ENCODE measurements at regions of chr17 and their contacts with region 1.

Region 1: DNA sequence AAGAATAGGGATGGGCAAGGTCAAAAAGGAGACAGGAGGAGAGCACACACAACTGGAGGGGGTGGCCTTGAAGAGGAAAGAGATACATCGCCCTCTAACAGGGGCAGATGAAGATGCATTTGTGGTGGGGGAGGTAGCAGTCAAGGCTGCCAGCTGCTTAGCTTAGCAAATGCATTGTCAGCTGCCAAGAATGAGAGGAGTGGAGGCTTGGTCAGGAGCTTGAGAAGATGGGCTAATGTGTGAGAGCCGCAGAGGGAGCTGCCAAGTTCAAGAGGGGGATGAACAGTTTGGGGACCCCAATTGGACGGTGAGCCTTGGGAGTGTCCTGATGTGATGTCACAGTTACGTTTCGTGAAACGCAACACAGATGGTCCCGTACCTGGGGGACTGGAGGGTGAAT is 28.9 kb upstream of the GNA13 start:
- DNase-seq: no peak
- H3K4me3 ChIP-seq: no peak overlapping the region
- H3K27ac ChIP-seq: no peak overlapping the region
- H3K4me1 ChIP-seq: peaks cover 0 to 5% (median 1%) of the 10 kb centered on the region in 4 experiments; a peak in 2 of 7 replicates
- H3K27me3 ChIP-seq: no peaks in the 10 kb centered on the region
- CTCF ChIP-seq: peak in 2 of 3 experiments; percentile 15 to 26; a peak in 2 of 4 replicates
- EP300 ChIP-seq: no peak
- POLR2A ChIP-seq: no peak
- RAD21 ChIP-seq: peak; percentile 30 to 33; a peak in 3 of 4 replicates

Region 2: GRCh38 chr17:65047942-65048341 is 37.5 kb before region 1 on chr17:
- CTCF ChIA-PET with region 1: no interaction called
- POLR2A ChIA-PET with region 1: no interaction called
- DNase-seq: no peak
- H3K4me3 ChIP-seq: no peak overlapping the region
- H3K27ac ChIP-seq: no peak overlapping the region
- H3K4me1 ChIP-seq: peaks cover 0 to 4% (median 0%) of the 10 kb centered on the region in 4 experiments; a peak in 1 of 7 replicates
- H3K27me3 ChIP-seq: no peaks in the 10 kb centered on the region
- CTCF ChIP-seq: no peak
- EP300 ChIP-seq: no peak
- POLR2A ChIP-seq: no peak
- RAD21 ChIP-seq: no peak

Region 3: GRCh38 chr17:65100316-65101140 is 15.1 kb after region 1 on chr17:
- CTCF ChIA-PET with region 1: interaction called, 64 read pairs
- POLR2A ChIA-PET with region 1: interaction called, 3 read pairs
- DNase-seq: peak; percentile 63 to 93
- H3K4me3 ChIP-seq: peak overlapping the region; percentile 38 to 66 (median 56)
- H3K27ac ChIP-seq: no peak overlapping the region
- H3K4me1 ChIP-seq: peaks cover 0 to 6% (median 3%) of the 10 kb centered on the region in 4 experiments; a peak in 2 of 7 replicates
- H3K27me3 ChIP-seq: no peaks in the 10 kb centered on the region
- CTCF ChIP-seq: peak; percentile 75 to 86 (median 82)
- EP300 ChIP-seq: 0 out of 3 replicates have a peak, but pooled peaks of 1 of the 2 experiments have one; percentile 35
- POLR2A ChIP-seq: peak in 1 of 2 experiments; percentile 19; a peak in 1 of 3 replicates
- RAD21 ChIP-seq: peak; percentile 55 to 78